Gastrocnemius medialis (tissue), 4 donors: ENCODE measurements at regions of chr2 and their contacts with region 1.

Region 1: GRCh38 chr2:166539340-166540162 is 45.5 kb upstream of the SCN7A start:
- DNase-seq: no peak
- ATAC-seq: peak; percentile 72 to 94
- H3K4me3 ChIP-seq: peak overlapping the region in 1 of 4 donors; percentile 28
- H3K27ac ChIP-seq: no peak overlapping the region
- H3K4me1 ChIP-seq: no peaks in the 10 kb centered on the region
- H3K27me3 ChIP-seq: no peaks in the 10 kb centered on the region
- CTCF ChIP-seq: peak; percentile 32 to 75 (median 65)
- POLR2A ChIP-seq: no peak

Region 2: GRCh38 chr2:167249197-167249596 is 709.6 kb after region 1 on chr2:
- in situ Hi-C with region 1: loop called in 1 of 4 experiments (anchors 25 kb)
- intact Hi-C with region 1: no loop called
- DNase-seq: no peak
- ATAC-seq: no peak
- H3K4me3 ChIP-seq: no peak overlapping the region
- H3K27ac ChIP-seq: peak overlapping the region in 1 of 4 donors; percentile 39
- H3K4me1 ChIP-seq: no peaks in the 10 kb centered on the region
- H3K27me3 ChIP-seq: no peaks in the 10 kb centered on the region
- CTCF ChIP-seq: no peak
- POLR2A ChIP-seq: no peak